Endothelial cell of umbilical vein (primary cell): ENCODE measurements at regions of chr11 and their contacts with region 1.

Region 1: GRCh38 chr11:36131721-36132397 is 157.4 kb downstream of the COMMD9 start:
- DNase-seq: peak; percentile 71
- H3K4me3 ChIP-seq: no peak overlapping the region
- H3K27ac ChIP-seq: no peak overlapping the region
- H3K4me1 ChIP-seq: peaks cover 9% of the 10 kb centered on the region
- H3K27me3 ChIP-seq: no peaks in the 10 kb centered on the region
- CTCF ChIP-seq: peak; percentile 65 to 80
- POLR2A ChIP-seq: no peak

Region 2: GRCh38 chr11:35617687-35618496 is 514.0 kb before region 1 on chr11 and contains the start of gene FJX1:
- CTCF ChIA-PET with region 1: interaction called, 12 read pairs
- POLR2A ChIA-PET with region 1: no interaction called
- dilution Hi-C with region 1: no loop called
- intact Hi-C with region 1: loop called (anchors 1 kb)
- DNase-seq: peak; percentile 83
- H3K4me3 ChIP-seq: peak within 1 kb of the TSS; percentile 54 to 75 (median 62)
- H3K27ac ChIP-seq: peak within 1 kb of the TSS; percentile 92
- H3K4me1 ChIP-seq: peaks cover 32% of the 10 kb centered on the region
- H3K27me3 ChIP-seq: peaks cover 3 to 18% of the 10 kb centered on the region in 2 experiments
- CTCF ChIP-seq: no peak
- POLR2A ChIP-seq: peak; percentile 32
- total RNA-seq, gene FJX1: 23.7 and 26.6 TPM in 2 replicates

Region 3: DNA sequence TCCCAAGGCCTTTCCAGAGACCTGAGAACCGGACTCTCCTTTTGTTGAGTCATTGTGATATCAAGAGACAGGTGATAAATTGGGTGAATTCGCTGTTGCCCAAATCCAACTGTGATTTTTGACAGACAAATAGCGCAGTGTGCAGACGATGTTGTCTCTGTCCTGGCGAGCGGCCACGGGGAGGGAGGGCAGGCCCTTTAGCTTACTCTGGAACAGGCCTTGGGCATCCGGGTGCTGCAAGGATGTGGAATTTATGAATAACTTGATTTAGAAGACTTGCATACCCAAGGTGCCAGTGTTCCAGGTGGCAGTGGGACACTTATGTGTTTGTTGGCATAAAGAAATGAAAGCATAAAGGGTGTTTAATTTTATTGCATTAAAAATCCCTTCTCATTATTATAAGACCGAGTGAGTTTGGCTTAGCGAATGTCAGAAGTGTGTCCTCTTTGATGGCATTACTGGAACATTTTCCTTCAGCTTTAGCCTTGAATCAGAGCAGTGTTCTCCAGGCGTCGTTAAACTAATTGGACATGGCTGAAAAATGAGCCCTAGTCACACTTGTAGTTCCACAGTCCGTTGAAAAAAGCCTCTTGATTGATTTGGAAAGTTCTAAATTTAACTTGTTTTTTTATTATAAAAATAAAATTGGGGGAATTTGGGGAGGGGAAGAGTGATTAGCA is 178.6 kb before region 1 on chr11:
- CTCF ChIA-PET with region 1: interaction called, 10 read pairs
- POLR2A ChIA-PET with region 1: no interaction called
- dilution Hi-C with region 1: no loop called
- intact Hi-C with region 1: loop called (anchors 5 kb)
- DNase-seq: peak; percentile 42
- H3K4me3 ChIP-seq: no peak overlapping the region
- H3K27ac ChIP-seq: peak overlapping the region; percentile 35
- H3K4me1 ChIP-seq: peaks cover 31% of the 10 kb centered on the region
- H3K27me3 ChIP-seq: no peaks in the 10 kb centered on the region
- CTCF ChIP-seq: no peak
- POLR2A ChIP-seq: no peak

Region 4: GRCh38 chr11:36056160-36056751 is 75.6 kb before region 1 on chr11:
- CTCF ChIA-PET with region 1: interaction called, 31 read pairs
- POLR2A ChIA-PET with region 1: no interaction called
- dilution Hi-C with region 1: no loop called
- intact Hi-C with region 1: loop called (anchors 1 kb)
- DNase-seq: peak; percentile 58
- H3K4me3 ChIP-seq: no peak overlapping the region
- H3K27ac ChIP-seq: no peak overlapping the region
- H3K4me1 ChIP-seq: peaks cover 18% of the 10 kb centered on the region
- H3K27me3 ChIP-seq: no peaks in the 10 kb centered on the region
- CTCF ChIP-seq: peak; percentile 69 to 73
- POLR2A ChIP-seq: no peak

Region 5: DNA sequence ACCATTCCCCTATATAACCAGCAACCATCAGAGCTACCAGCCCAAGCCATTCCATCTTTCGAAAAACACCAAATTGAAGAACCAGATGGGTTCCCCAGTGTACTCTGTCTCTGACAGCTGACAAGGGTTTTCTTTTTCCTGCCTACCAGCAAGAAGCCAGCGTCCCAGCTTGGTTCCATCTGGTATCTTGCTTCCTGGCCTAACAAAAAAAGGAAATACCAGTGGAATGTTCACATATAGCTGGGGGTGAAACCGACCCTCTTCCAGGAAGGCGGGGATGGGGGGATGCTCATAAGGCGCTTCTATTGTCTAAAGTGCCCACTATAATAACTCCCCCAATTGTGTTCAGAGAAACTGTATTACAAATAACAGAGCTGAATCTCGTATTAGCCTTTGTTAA is 15.7 kb before region 1 on chr11:
- CTCF ChIA-PET with region 1: interaction called, 40 read pairs
- POLR2A ChIA-PET with region 1: interaction called, 4 read pairs
- dilution Hi-C with region 1: no loop called
- intact Hi-C with region 1: no loop called
- DNase-seq: peak; percentile 88
- H3K4me3 ChIP-seq: no peak overlapping the region
- H3K27ac ChIP-seq: peak overlapping the region; percentile 76
- H3K4me1 ChIP-seq: peaks cover 26% of the 10 kb centered on the region
- H3K27me3 ChIP-seq: no peaks in the 10 kb centered on the region
- CTCF ChIP-seq: no peak
- POLR2A ChIP-seq: no peak

Region 6: GRCh38 chr11:36156161-36156816 is 24.4 kb after region 1 on chr11:
- CTCF ChIA-PET with region 1: interaction called, 23 read pairs
- POLR2A ChIA-PET with region 1: no interaction called
- dilution Hi-C with region 1: no loop called
- intact Hi-C with region 1: no loop called
- DNase-seq: peak; percentile 70
- H3K4me3 ChIP-seq: no peak overlapping the region
- H3K27ac ChIP-seq: peak overlapping the region; percentile 75
- H3K4me1 ChIP-seq: peaks cover 28% of the 10 kb centered on the region
- H3K27me3 ChIP-seq: no peaks in the 10 kb centered on the region
- CTCF ChIP-seq: no peak
- POLR2A ChIP-seq: no peak